ENCODE measurements at regions of chr17 and their contacts with region 1.

Region 1: DNA sequence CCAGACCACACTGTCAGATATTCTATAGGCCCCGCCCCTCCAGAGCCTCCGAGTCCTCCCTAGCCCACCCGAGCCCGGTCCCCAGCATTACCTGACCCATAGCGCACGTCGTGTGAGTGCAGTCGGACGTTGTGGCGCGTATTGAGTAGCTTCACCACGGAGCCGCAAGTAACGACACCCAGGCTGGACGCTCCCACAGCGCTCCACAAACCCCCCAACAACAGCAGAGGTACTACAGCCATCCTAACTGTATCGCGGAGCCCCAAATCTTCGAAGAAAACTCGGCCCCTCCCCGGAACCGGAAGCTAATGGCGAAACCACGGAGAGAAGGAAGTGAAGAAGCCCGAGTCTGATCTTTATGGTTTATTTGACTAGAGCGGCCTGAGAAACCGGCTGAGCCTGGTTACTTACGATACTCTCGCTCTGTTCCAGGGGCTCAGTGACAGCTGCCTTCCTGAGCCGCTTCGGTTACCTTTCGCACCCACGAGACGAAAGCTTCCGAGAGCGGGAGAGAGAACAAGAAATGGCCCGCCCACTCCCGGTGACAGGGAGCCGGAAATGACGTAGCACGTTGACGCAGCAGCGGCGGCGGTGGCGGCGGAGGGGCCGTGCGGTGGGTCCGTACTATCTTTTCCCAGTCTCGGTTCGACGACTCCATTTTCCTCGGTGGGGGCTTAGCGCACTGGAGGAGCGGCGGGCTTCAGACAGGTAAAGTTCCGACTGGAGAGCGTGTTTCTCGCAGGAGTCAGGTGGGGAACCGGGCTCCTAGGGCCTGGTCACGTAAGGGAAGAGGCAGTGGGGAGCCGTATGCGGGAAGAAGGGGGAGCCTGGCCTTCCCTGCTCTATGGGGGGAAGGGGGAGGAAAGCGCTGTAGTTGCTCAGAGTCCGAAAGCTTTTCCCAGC is at the starts of genes SDF2 and SUPT6H:
- DNase-seq: peak; percentile 56
- ATAC-seq: peak; percentile 98
- H3K4me3 ChIP-seq: peak within 1 kb of the TSS; percentile 90 to 95
- H3K27ac ChIP-seq: peak within 1 kb of the TSS; percentile 97
- H3K4me1 ChIP-seq: peaks cover 18% of the 10 kb centered on the region
- H3K27me3 ChIP-seq: no peaks in the 10 kb centered on the region
- CTCF ChIP-seq: no peak
- total RNA-seq, gene SDF2: 72.1 TPM
- total RNA-seq, gene SUPT6H: 108 TPM

Region 2: GRCh38 chr17:28693869-28694268 is 32.0 kb after region 1 on chr17:
- CTCF ChIA-PET with region 1: no interaction called
- POLR2A ChIA-PET with region 1: no interaction called
- in situ Hi-C with region 1: no loop called
- intact Hi-C with region 1: no loop called
- DNase-seq: no peak
- ATAC-seq: no peak
- H3K4me3 ChIP-seq: no peak overlapping the region
- H3K27ac ChIP-seq: no peak overlapping the region
- H3K4me1 ChIP-seq: no peaks in the 10 kb centered on the region
- H3K27me3 ChIP-seq: no peaks in the 10 kb centered on the region
- CTCF ChIP-seq: no peak

Region 3: DNA sequence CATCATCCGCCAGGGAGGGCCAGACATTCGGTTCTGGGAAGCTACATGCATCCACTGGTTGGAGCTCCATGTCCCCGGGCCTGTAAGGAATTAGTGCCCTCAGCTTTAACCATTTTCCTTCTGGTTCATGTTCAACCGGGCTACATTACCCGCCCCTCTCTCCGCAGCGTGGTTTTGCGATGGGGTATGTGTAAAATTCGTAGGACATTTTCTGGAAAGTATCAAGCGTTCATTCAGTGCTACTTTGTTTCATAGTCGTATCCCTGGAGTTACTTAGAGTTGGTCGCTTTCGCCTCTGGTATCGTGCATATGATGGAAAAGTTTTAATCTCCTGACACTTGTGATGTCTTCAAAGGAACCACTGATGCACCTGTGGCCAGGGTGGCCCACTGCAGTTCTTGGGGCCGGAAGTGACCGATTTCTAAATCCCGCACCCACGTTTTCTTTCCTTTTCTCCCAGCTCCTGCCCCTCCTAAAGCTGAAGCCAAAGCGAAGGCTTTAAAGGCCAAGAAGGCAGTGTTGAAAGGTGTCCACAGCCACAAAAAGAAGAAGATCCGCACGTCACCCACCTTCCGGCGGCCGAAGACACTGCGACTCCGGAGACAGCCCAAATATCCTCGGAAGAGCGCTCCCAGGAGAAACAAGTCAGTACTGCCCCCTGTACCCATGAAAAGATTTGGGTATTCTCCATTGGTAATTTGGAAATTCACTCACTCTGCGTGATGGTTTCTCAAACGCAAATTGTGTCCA is 58.5 kb after region 1 on chr17:
- CTCF ChIA-PET with region 1: interaction called, 11 read pairs
- POLR2A ChIA-PET with region 1: interaction called, 5 read pairs
- in situ Hi-C with region 1: no loop called
- intact Hi-C with region 1: no loop called
- DNase-seq: no peak
- ATAC-seq: no peak
- H3K4me3 ChIP-seq: peak overlapping the region; percentile 58 to 88
- H3K27ac ChIP-seq: peak overlapping the region; percentile 99
- H3K4me1 ChIP-seq: peaks cover 50% of the 10 kb centered on the region
- H3K27me3 ChIP-seq: no peaks in the 10 kb centered on the region
- CTCF ChIP-seq: no peak

Measured in Panc1 (cell line).